ENCODE measurements at regions of chr3 and their contacts with region 1.

Region 1: DNA sequence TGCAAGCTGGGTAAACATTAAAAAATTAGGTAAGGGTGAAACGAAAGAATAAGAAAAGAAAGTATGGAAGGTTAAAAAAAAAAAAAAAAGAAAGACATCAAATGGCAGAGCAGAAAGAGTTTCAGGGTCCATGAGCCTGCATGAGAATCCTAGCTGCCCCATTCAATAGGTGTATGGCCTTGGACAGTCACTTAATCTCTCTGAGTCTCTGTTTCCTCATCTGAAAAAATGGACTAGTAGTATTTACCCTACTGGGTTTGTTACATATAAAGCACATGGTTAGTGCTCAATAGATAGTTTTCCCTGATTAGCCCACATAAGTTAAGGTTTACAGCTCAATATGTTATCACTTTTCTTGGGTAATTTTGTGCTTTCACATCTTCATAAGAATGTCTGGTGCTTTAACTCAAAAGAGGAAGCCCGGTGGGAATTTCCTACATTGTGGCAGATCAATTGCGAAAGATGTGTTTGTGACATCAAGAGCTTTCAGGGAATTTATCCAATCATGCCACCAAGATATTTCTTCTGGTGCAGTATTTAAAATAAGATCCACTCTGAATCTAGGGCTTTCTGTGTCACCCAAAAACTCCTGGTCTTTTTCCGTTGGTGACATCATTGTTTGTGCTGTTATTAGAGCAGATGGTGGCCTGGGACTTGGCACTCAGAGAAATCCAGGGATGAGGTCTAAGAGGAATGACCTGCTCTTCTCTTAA is 57.2 kb upstream of the UBE2E1 start:
- DNase-seq: no peak
- H3K4me3 ChIP-seq: no peak overlapping the region
- H3K27ac ChIP-seq: no peak overlapping the region
- H3K4me1 ChIP-seq: peaks cover 14 to 25% (median 19%) of the 10 kb centered on the region in 4 experiments
- H3K27me3 ChIP-seq: peaks cover 3 to 20% (median 16%) of the 10 kb centered on the region in 4 experiments
- CTCF ChIP-seq: no peak
- EP300 ChIP-seq: no peak
- POLR2A ChIP-seq: no peak
- RAD21 ChIP-seq: no peak

Region 2: GRCh38 chr3:23712656-23713559 is 35.6 kb before region 1 on chr3:
- CTCF ChIA-PET with region 1: interaction called, 13 read pairs
- POLR2A ChIA-PET with region 1: no interaction called
- DNase-seq: peak; percentile 68 to 72
- H3K4me3 ChIP-seq: no peak overlapping the region
- H3K27ac ChIP-seq: no peak overlapping the region
- H3K4me1 ChIP-seq: peaks cover 7 to 17% (median 13%) of the 10 kb centered on the region in 4 experiments
- H3K27me3 ChIP-seq: peaks cover 0 to 2% (median 0%) of the 10 kb centered on the region in 4 experiments; a peak in 1 of 7 replicates
- CTCF ChIP-seq: peak; percentile 40 to 72 (median 55)
- EP300 ChIP-seq: no peak; a peak in 1 of 3 replicates
- POLR2A ChIP-seq: no peak
- RAD21 ChIP-seq: peak; percentile 81 to 89

Region 3: GRCh38 chr3:23793528-23794134 is 45.1 kb after region 1 on chr3:
- CTCF ChIA-PET with region 1: no interaction called
- POLR2A ChIA-PET with region 1: no interaction called
- DNase-seq: no peak
- H3K4me3 ChIP-seq: no peak overlapping the region
- H3K27ac ChIP-seq: no peak overlapping the region
- H3K4me1 ChIP-seq: no peaks in the 10 kb centered on the region; a peak in 1 of 7 replicates
- H3K27me3 ChIP-seq: no peaks in the 10 kb centered on the region
- CTCF ChIP-seq: no peak
- EP300 ChIP-seq: no peak
- POLR2A ChIP-seq: no peak
- RAD21 ChIP-seq: no peak